GM12878 (cell line): ENCODE measurements at regions of chr12 and their contacts with region 1.

Region 1: GRCh38 chr12:82685790-82686167 is 927 bp upstream of the TMTC2 start:
- DNase-seq: peak; percentile 73
- ATAC-seq: peak; percentile 77
- H3K4me3 ChIP-seq: peak overlapping the region; percentile 75
- H3K27ac ChIP-seq: peak overlapping the region; percentile 94
- H3K4me1 ChIP-seq: peaks cover 5% of the 10 kb centered on the region
- H3K27me3 ChIP-seq: no peaks in the 10 kb centered on the region
- CTCF ChIP-seq: peak; percentile 83 to 98 (median 89); a peak in 5 of 6 replicates
- EP300 ChIP-seq: no peak
- POLR2A ChIP-seq: no peak
- RAD21 ChIP-seq: peak; percentile 95

Region 2: DNA sequence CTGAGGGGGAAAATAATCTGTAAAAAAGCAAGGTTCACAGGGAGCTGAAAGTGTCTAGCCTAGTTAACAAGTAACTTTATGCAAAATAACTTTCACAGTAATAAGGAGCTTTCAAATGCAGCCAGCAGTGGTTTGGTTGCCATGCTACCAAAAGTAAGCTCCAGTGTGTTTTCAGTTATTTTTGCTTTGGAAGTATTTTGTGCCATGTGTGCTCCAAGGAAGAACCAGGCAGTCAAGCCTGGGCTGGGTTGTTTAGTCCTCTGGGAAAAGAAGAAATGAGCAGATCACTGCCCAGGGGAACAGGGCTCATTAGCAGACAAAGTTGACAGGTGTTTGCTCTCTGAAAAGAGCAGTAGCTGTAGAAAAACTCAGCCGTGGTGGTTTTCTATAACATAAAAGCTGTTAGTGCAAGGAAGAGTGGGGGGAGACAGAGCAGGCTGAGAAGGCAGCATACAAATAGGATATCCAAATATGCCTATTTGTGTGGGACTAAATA is 91.8 kb before region 1 on chr12:
- CTCF ChIA-PET with region 1: interaction called, 13 read pairs
- POLR2A ChIA-PET with region 1: interaction called, 3 read pairs
- RAD21 ChIA-PET with region 1: interaction called, 15 read pairs
- SMC1A ChIA-PET with region 1: interaction called, 7 read pairs
- in situ Hi-C with region 1: no loop called
- intact Hi-C with region 1: no loop called
- DNase-seq: peak; percentile 49
- ATAC-seq: peak; percentile 91
- H3K4me3 ChIP-seq: no peak overlapping the region; the same call in 1 of the 2 replicates
- H3K27ac ChIP-seq: peak overlapping the region; percentile 39
- H3K4me1 ChIP-seq: peaks cover 4% of the 10 kb centered on the region; the same call in 1 of the 2 replicates
- H3K27me3 ChIP-seq: no peaks in the 10 kb centered on the region
- CTCF ChIP-seq: no peak
- EP300 ChIP-seq: peak; percentile 74 to 82; a peak in 3 of 4 replicates
- POLR2A ChIP-seq: no peak
- RAD21 ChIP-seq: no peak

Region 3: GRCh38 chr12:82672811-82673495 is 12.8 kb before region 1 on chr12:
- CTCF ChIA-PET with region 1: interaction called, 13 read pairs
- POLR2A ChIA-PET with region 1: interaction called, 8 read pairs
- RAD21 ChIA-PET with region 1: interaction called, 3 read pairs
- SMC1A ChIA-PET with region 1: interaction called, 20 read pairs
- in situ Hi-C with region 1: no loop called
- intact Hi-C with region 1: no loop called
- DNase-seq: no peak
- ATAC-seq: no peak
- H3K4me3 ChIP-seq: no peak overlapping the region
- H3K27ac ChIP-seq: no peak overlapping the region
- H3K4me1 ChIP-seq: no peaks in the 10 kb centered on the region
- H3K27me3 ChIP-seq: no peaks in the 10 kb centered on the region
- CTCF ChIP-seq: no peak
- EP300 ChIP-seq: no peak
- POLR2A ChIP-seq: no peak
- RAD21 ChIP-seq: no peak

Region 4: DNA sequence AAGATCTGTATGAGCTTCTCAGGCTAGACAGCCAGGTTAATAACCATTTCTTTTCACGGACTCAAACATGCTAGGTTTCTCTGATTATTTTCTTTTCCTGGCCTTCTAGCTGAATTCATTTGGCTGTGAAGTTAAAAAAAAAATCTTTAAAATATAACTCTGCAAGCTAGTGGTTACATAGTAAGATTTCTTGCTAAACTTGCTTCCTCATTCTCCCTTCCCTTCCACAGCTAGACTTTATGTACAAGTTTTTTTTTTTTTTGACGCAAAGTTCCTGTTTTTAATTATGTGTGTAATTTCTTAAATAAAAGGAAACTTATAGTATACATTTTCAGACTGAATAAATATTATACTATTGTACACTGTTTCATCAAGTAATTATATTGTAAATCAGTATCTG is 146.3 kb after region 1 on chr12:
- CTCF ChIA-PET with region 1: no interaction called
- POLR2A ChIA-PET with region 1: interaction called, 3 read pairs
- RAD21 ChIA-PET with region 1: interaction called, 10 read pairs
- SMC1A ChIA-PET with region 1: interaction called, 4 read pairs
- in situ Hi-C with region 1: no loop called
- intact Hi-C with region 1: no loop called
- DNase-seq: no peak
- ATAC-seq: no peak
- H3K4me3 ChIP-seq: no peak overlapping the region
- H3K27ac ChIP-seq: no peak overlapping the region
- H3K4me1 ChIP-seq: no peaks in the 10 kb centered on the region
- H3K27me3 ChIP-seq: no peaks in the 10 kb centered on the region
- CTCF ChIP-seq: no peak
- EP300 ChIP-seq: no peak
- POLR2A ChIP-seq: no peak
- RAD21 ChIP-seq: no peak

Region 5: GRCh38 chr12:82923935-82924334 is 238.2 kb after region 1 on chr12:
- CTCF ChIA-PET with region 1: no interaction called
- POLR2A ChIA-PET with region 1: no interaction called
- RAD21 ChIA-PET with region 1: no interaction called
- SMC1A ChIA-PET with region 1: no interaction called
- in situ Hi-C with region 1: no loop called
- intact Hi-C with region 1: no loop called
- DNase-seq: no peak
- ATAC-seq: no peak
- H3K4me3 ChIP-seq: no peak overlapping the region
- H3K27ac ChIP-seq: no peak overlapping the region
- H3K4me1 ChIP-seq: no peaks in the 10 kb centered on the region
- H3K27me3 ChIP-seq: no peaks in the 10 kb centered on the region
- CTCF ChIP-seq: no peak
- EP300 ChIP-seq: no peak
- POLR2A ChIP-seq: no peak
- RAD21 ChIP-seq: no peak

Region 6: DNA sequence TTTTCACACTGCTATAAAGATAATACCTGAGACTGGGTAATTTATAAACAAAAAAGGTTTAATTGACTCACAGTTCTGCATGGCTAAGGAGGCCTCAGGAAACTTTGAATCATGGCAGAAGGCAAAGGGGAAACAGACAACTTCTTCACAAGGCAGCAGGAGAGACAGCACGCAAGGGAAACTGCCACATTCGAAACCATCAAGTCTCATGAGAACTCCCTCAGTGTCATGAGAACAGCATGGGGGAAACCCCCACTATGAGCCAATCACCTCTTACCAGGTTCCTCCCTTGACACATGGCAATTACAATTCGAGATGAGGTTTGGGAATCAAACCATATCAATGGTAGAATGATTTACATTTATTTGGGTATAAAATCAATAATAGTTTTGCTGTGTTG is 559.4 kb after region 1 on chr12:
- CTCF ChIA-PET with region 1: no interaction called
- POLR2A ChIA-PET with region 1: no interaction called
- RAD21 ChIA-PET with region 1: no interaction called
- SMC1A ChIA-PET with region 1: no interaction called
- in situ Hi-C with region 1: no loop called
- intact Hi-C with region 1: loop called (anchors 10 kb)
- DNase-seq: peak; percentile 11
- ATAC-seq: peak; percentile 71
- H3K4me3 ChIP-seq: no peak overlapping the region
- H3K27ac ChIP-seq: no peak overlapping the region
- H3K4me1 ChIP-seq: no peaks in the 10 kb centered on the region
- H3K27me3 ChIP-seq: no peaks in the 10 kb centered on the region
- CTCF ChIP-seq: no peak
- EP300 ChIP-seq: no peak
- POLR2A ChIP-seq: no peak
- RAD21 ChIP-seq: no peak

Region 7: GRCh38 chr12:83473408-83474095 is 787.8 kb after region 1 on chr12:
- CTCF ChIA-PET with region 1: interaction called, 3 read pairs
- POLR2A ChIA-PET with region 1: interaction called, 3 read pairs
- RAD21 ChIA-PET with region 1: interaction called, 3 read pairs
- SMC1A ChIA-PET with region 1: interaction called, 5 read pairs
- in situ Hi-C with region 1: no loop called
- intact Hi-C with region 1: loop called (anchors 10 kb)
- DNase-seq: peak; percentile 26
- ATAC-seq: peak; percentile 95
- H3K4me3 ChIP-seq: no peak overlapping the region
- H3K27ac ChIP-seq: no peak overlapping the region
- H3K4me1 ChIP-seq: no peaks in the 10 kb centered on the region
- H3K27me3 ChIP-seq: no peaks in the 10 kb centered on the region
- CTCF ChIP-seq: no peak
- EP300 ChIP-seq: no peak
- POLR2A ChIP-seq: no peak
- RAD21 ChIP-seq: no peak

Region 8: DNA sequence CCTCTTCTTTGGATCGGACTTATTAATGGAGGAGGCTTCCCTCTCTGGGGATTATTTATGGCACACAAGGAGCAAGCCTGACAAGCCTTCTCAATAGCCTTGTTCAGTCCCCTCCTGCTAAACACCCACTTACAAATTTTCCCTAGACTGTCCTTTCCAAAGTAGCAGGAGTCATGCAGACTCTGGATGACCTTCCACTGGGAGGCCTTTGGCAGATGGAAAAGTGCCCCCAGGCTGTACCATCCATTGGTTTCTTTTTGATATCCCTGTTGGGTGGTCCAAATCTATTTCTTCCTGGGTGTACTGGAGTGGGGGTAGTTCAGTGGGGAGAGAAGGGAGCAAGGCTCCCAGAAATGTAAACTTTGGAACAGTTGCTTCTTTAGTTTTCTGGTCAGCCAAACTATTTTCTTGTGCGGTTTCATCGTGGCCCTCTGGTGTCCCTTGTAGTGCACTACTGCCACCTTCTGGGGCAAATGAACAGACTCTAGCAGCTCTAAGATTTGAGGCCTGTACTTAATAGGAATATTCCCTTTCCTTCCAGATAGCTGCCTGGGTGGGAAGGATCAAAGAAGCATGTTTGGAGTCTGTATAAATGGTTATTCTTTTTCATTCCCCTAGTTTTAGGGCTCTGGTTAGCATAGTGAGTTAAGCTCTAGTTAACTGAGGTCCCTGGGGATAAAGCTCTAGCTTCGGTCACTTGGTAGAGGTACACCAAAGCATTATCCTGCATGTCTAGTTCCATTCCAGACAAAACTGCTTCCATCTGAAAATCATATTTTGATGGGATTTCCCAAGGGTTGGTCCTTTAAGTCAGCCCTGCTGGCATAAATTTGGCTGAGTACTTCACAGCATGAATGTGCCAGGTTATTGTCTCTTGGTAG is 1817.4 kb after region 1 on chr12:
- CTCF ChIA-PET with region 1: interaction called, 12 read pairs
- POLR2A ChIA-PET with region 1: no interaction called
- RAD21 ChIA-PET with region 1: interaction called, 16 read pairs
- SMC1A ChIA-PET with region 1: interaction called, 5 read pairs
- in situ Hi-C with region 1: loop called (anchors 5 kb)
- intact Hi-C with region 1: loop called (anchors 2 kb)
- DNase-seq: no peak
- ATAC-seq: peak; percentile 96
- H3K4me3 ChIP-seq: no peak overlapping the region
- H3K27ac ChIP-seq: no peak overlapping the region
- H3K4me1 ChIP-seq: no peaks in the 10 kb centered on the region
- H3K27me3 ChIP-seq: no peaks in the 10 kb centered on the region; a peak in 1 of 4 replicates
- CTCF ChIP-seq: peak; percentile 64 to 74 (median 68)
- EP300 ChIP-seq: no peak
- POLR2A ChIP-seq: no peak
- RAD21 ChIP-seq: peak; percentile 84